OCI-LY7 (cell line): ENCODE measurements at regions of chr4 and their contacts with region 1.

Region 1: GRCh38 chr4:41692717-41693345 is 55.7 kb downstream of the PHOX2B start:
- DNase-seq: peak; percentile 48
- H3K4me3 ChIP-seq: no peak overlapping the region
- H3K27ac ChIP-seq: no peak overlapping the region
- H3K4me1 ChIP-seq: no peaks in the 10 kb centered on the region
- CTCF ChIP-seq: peak; percentile 92

Region 2: DNA sequence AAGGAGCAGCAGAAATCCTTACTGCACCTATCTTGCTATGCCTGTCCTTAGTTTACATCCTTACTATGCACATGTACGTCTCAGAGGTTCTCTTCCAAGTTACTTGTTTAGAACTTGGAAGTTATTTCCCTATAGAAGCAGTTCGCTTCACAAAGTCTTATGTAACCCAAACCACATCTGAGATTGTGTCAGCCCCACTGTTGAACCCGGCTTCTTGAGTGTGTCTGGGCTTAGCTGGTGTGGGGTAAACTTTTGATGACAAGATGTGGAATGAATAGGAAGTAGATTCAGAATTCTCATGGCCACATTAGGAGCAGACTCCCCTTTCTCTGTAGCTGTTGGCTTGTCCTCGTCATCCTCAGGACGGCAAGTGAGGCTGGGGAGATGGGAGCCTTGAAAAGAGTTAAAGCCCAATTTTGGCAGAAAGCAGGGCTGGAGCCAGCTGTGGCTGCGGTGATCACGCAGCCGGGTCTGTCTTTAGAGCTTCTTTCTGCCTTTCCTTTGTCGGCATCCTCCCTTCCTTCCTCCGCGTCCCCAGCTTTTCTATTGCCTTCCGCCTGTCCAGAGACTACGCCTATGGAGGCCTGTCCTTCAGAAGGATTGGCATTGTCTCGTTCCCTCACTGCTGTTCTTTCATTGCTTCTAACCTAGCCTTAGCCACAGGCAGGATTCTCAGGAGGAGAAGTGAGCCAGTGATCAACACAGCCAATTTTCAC is 177.9 kb before region 1 on chr4:
- CTCF ChIA-PET with region 1: no interaction called
- POLR2A ChIA-PET with region 1: no interaction called
- intact Hi-C with region 1: no loop called
- DNase-seq: no peak
- H3K4me3 ChIP-seq: no peak overlapping the region
- H3K27ac ChIP-seq: no peak overlapping the region
- H3K4me1 ChIP-seq: no peaks in the 10 kb centered on the region
- CTCF ChIP-seq: no peak

Region 3: GRCh38 chr4:41751449-41752061 is 58.7 kb after region 1 on chr4:
- CTCF ChIA-PET with region 1: no interaction called
- POLR2A ChIA-PET with region 1: no interaction called
- intact Hi-C with region 1: no loop called
- DNase-seq: no peak
- H3K4me3 ChIP-seq: no peak overlapping the region
- H3K27ac ChIP-seq: no peak overlapping the region
- H3K4me1 ChIP-seq: no peaks in the 10 kb centered on the region
- CTCF ChIP-seq: peak; percentile 37; the same call in 1 of the 2 replicates

Region 4: GRCh38 chr4:41882625-41883347 is 190.0 kb after region 1 on chr4:
- CTCF ChIA-PET with region 1: no interaction called
- POLR2A ChIA-PET with region 1: no interaction called
- intact Hi-C with region 1: loop called (anchors 1 kb)
- DNase-seq: peak; percentile 40
- H3K4me3 ChIP-seq: no peak overlapping the region
- H3K27ac ChIP-seq: no peak overlapping the region
- H3K4me1 ChIP-seq: no peaks in the 10 kb centered on the region
- CTCF ChIP-seq: peak; percentile 95

Region 5: GRCh38 chr4:41887821-41888686 is 195.2 kb after region 1 on chr4:
- CTCF ChIA-PET with region 1: no interaction called
- POLR2A ChIA-PET with region 1: no interaction called
- intact Hi-C with region 1: loop called (anchors 1 kb)
- DNase-seq: peak; percentile 55
- H3K4me3 ChIP-seq: no peak overlapping the region
- H3K27ac ChIP-seq: no peak overlapping the region
- H3K4me1 ChIP-seq: no peaks in the 10 kb centered on the region
- CTCF ChIP-seq: peak; percentile 99

Region 6: DNA sequence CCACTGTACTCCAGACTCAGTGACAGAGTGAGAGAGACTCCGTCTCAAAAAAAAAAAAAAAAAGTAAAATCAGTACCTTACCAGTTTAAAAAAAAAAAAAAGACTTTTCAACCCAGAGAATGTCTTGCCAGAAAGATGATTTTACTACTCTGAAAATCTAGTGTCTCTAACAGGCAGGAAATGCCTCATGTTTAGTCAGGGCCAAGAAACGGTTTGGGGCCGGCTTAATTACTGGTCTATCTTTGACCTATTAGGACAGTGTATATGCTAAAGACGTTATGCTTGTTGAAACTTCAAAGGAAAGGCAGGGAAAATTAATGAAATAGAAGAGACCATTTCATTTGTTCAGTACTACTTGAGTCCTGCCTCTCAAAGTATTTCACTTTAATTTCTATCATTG is 449.8 kb after region 1 on chr4:
- CTCF ChIA-PET with region 1: no interaction called
- POLR2A ChIA-PET with region 1: no interaction called
- intact Hi-C with region 1: no loop called
- DNase-seq: no peak
- H3K4me3 ChIP-seq: no peak overlapping the region
- H3K27ac ChIP-seq: no peak overlapping the region
- H3K4me1 ChIP-seq: no peaks in the 10 kb centered on the region
- CTCF ChIP-seq: no peak